CD8-positive, alpha-beta T cell (primary cell): ENCODE measurements at regions of chr12 and their contacts with region 1.

Region 1: DNA sequence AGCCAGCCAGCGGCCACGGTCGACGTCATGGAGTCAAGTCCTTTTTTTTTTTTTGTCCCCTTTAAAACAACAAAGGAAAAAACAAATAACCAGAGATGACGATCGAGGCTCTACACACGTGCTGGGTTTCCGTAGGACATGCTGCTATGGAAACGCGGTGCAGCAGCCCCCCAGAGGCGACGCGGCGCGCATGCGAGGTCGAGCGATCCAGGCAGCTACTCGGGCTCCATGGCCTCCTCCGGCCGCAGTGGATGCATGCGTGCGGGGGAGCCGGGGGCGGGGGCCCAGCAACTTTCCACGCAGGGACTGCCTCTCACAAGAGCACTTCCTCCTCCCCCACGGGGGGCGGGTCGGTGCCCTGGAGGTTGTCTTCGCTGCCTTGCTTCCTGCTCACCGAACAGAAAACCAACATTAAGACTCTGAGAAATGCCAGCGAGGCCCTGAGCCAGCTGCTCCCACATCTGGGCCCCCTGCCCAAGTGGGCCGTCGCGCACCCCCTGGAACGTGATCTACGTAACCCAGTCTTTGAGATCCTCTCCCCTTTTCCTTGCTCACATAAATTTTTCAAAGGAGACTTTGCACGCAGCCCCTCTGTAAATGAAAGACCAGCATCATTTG is 30.7 kb downstream of the P2RX4 start:
- DNase-seq: peak; percentile 82 to 100 (median 94)
- ATAC-seq: peak; percentile 95
- H3K4me3 ChIP-seq: peak overlapping the region; percentile 40 to 42
- H3K4me3 Mint-ChIP-seq: peak overlapping the region; percentile 84
- H3K27ac ChIP-seq: peak overlapping the region; percentile 85 to 88
- H3K27ac Mint-ChIP-seq: peak overlapping the region; percentile 96
- H3K4me1 ChIP-seq: peaks cover 42% of the 10 kb centered on the region
- H3K4me1 Mint-ChIP-seq: peaks cover 47% of the 10 kb centered on the region
- H3K27me3 ChIP-seq: no peaks in the 10 kb centered on the region
- H3K27me3 Mint-ChIP-seq: no peaks in the 10 kb centered on the region
- CTCF ChIP-seq: no peak

Region 2: GRCh38 chr12:121015825-121016766 is 224.5 kb before region 1 on chr12 and contains the start of gene C12orf43:
- CTCF ChIA-PET with region 1: no interaction called
- POLR2A ChIA-PET with region 1: no interaction called
- intact Hi-C with region 1: loop called in 1 of 2 experiments (anchors 1 kb)
- DNase-seq: peak; percentile 83 to 95 (median 92)
- ATAC-seq: peak; percentile 97
- H3K4me3 ChIP-seq: peak within 1 kb of the TSS; percentile 69 to 91
- H3K4me3 Mint-ChIP-seq: peak within 1 kb of the TSS; percentile 93
- H3K27ac ChIP-seq: peak within 1 kb of the TSS; percentile 60 to 89
- H3K27ac Mint-ChIP-seq: peak within 1 kb of the TSS; percentile 93
- H3K4me1 ChIP-seq: peaks cover 8% of the 10 kb centered on the region
- H3K4me1 Mint-ChIP-seq: peaks cover 21% of the 10 kb centered on the region
- H3K27me3 ChIP-seq: no peaks in the 10 kb centered on the region
- H3K27me3 Mint-ChIP-seq: no peaks in the 10 kb centered on the region
- CTCF ChIP-seq: no peak
- total RNA-seq, gene C12orf43: 20.7 to 21.4 TPM

Region 3: DNA sequence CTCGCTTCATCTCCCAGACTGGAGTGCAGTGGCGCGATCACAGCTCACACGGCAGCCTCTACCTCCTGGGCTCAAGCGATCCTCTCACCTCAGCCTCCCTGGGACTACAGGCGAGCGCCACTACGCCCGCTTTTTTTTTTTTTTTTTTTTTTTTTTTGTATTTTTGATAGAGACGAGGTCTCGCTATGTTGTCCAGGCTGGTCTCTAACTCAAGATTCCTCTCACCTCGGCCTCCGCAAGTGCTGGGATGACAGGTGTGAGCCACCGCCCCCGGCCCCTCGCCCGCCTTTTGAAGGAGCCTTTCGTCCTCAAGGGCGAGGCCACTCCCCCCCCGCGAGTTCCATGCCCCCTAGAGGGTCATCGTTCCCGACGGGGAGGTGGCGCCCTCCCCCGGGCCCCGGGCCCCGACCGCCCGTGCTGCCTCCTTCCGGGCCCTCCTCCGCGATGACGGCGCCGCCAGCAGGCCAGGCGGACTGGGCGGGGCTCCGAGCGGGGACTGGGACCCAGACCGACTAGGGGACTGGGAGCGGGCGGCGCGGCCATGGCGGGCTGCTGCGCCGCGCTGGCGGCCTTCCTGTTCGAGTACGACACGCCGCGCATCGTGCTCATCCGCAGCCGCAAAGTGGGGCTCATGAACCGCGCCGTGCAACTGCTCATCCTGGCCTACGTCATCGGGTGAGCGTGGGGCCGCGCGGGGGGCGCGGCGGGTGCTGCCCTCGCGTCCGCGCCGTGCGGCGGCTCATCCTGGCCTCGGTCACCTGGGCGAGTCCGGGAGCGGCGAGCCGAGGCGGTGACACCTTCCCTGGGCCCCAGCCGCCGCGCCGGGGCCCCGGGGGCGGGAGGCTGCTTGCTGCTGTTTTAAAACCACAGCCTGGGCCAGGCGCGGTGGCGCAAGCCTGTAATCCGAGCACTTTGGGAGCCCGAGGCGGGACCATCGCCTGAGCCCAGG is 30.7 kb before region 1 on chr12 and contains the start of gene P2RX4:
- CTCF ChIA-PET with region 1: no interaction called
- POLR2A ChIA-PET with region 1: interaction called, 4 read pairs
- intact Hi-C with region 1: loop called (anchors 1 kb)
- DNase-seq: peak; percentile 72 to 96 (median 88)
- ATAC-seq: peak; percentile 86
- H3K4me3 ChIP-seq: peak within 1 kb of the TSS; percentile 60 to 66
- H3K4me3 Mint-ChIP-seq: peak within 1 kb of the TSS; percentile 78
- H3K27ac ChIP-seq: peak within 1 kb of the TSS; percentile 85 to 86
- H3K27ac Mint-ChIP-seq: peak within 1 kb of the TSS; percentile 92
- H3K4me1 ChIP-seq: peaks cover 16% of the 10 kb centered on the region
- H3K4me1 Mint-ChIP-seq: peaks cover 24% of the 10 kb centered on the region
- H3K27me3 ChIP-seq: no peaks in the 10 kb centered on the region
- H3K27me3 Mint-ChIP-seq: no peaks in the 10 kb centered on the region
- CTCF ChIP-seq: no peak
- total RNA-seq, gene P2RX4: 27.5 to 29.8 TPM

Region 4: DNA sequence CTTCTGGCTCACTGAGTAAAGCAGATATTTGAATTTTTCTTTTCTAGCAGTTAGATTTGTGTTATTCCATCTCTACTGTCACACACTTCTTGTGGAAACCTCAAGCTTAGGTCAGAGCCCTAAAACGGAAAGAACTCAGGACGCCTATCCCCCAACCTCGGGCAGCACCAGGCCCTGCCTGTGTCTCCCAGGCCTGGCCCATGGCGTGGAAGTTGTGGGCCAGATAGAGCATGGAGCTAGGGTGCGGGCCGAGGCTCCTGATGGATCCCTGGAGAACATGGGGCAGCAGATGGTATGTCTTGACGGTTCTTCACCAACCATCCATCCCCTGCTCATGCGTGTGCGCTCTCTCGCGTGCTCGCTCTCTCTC is 10.1 kb before region 1 on chr12:
- CTCF ChIA-PET with region 1: interaction called, 24 read pairs
- POLR2A ChIA-PET with region 1: interaction called, 10 read pairs
- intact Hi-C with region 1: loop called in 1 of 2 experiments (anchors 1 kb)
- DNase-seq: no peak
- ATAC-seq: no peak
- H3K4me3 ChIP-seq: no peak overlapping the region
- H3K4me3 Mint-ChIP-seq: no peak overlapping the region
- H3K27ac ChIP-seq: no peak overlapping the region
- H3K27ac Mint-ChIP-seq: no peak overlapping the region
- H3K4me1 ChIP-seq: peaks cover 31% of the 10 kb centered on the region
- H3K4me1 Mint-ChIP-seq: peaks cover 21% of the 10 kb centered on the region
- H3K27me3 ChIP-seq: no peaks in the 10 kb centered on the region
- H3K27me3 Mint-ChIP-seq: no peaks in the 10 kb centered on the region
- CTCF ChIP-seq: no peak

Region 5: GRCh38 chr12:122500685-122501488 is 1260.3 kb after region 1 on chr12 and contains the start of gene ZCCHC8:
- CTCF ChIA-PET with region 1: no interaction called
- POLR2A ChIA-PET with region 1: no interaction called
- intact Hi-C with region 1: loop called in 1 of 2 experiments (anchors 5 kb)
- DNase-seq: peak; percentile 92 to 98 (median 96)
- ATAC-seq: peak; percentile 92
- H3K4me3 ChIP-seq: peak within 1 kb of the TSS; percentile 74 to 80
- H3K4me3 Mint-ChIP-seq: peak within 1 kb of the TSS; percentile 97
- H3K27ac ChIP-seq: peak within 1 kb of the TSS; percentile 90 to 92
- H3K27ac Mint-ChIP-seq: peak within 1 kb of the TSS; percentile 99
- H3K4me1 ChIP-seq: peaks cover 17% of the 10 kb centered on the region
- H3K4me1 Mint-ChIP-seq: peaks cover 40% of the 10 kb centered on the region
- H3K27me3 ChIP-seq: no peaks in the 10 kb centered on the region
- H3K27me3 Mint-ChIP-seq: no peaks in the 10 kb centered on the region
- CTCF ChIP-seq: no peak
- total RNA-seq, gene ZCCHC8: 53.4 to 55.6 TPM